ENCODE measurements at regions of chr12 and their contacts with region 1.

Region 1: DNA sequence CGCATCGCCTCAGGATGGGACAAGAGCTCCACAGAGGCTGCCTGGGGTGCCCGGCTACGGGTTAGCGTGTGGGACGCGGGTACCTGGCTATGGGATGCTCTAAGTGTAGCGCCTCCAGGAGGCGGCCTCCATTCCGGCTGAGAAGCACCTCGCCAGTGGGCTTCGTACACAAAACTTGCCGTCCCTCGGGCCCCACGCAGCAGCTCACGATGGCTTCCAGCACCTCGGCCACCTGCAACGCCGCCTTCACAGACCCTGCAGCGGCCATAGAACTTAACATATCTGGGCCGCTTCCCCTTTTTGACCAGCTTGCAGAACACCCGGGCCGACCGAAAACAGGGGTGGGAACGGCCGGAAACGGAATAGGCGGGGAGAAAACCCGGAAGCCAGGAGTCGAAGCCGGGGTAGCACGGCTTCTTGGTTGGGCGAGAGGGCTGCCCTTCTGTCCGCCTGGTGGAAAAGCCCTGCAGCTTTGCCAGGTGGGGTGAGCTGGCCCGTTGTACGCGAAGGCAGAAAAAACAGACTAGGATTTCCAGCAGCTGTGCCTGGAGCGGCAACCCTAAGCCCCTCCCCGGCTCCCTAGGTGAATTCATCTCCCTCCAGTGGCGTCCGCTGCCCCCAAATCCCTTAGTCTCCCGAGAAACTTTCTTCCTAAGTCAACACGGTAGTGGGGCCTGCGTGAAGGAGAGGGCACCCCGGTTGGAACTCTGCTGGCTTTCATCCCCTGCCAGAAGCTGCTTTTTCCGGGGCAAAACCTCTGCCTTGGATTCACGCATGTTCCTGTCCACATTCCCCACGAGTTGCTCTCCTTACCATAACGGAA is at the start of gene BBS10:
- DNase-seq: peak; percentile 70
- ATAC-seq: peak; percentile 99
- H3K4me3 ChIP-seq: peak within 1 kb of the TSS; percentile 84
- H3K27ac ChIP-seq: peak within 1 kb of the TSS; percentile 83
- H3K4me1 ChIP-seq: peaks cover 7% of the 10 kb centered on the region; the same call in 1 of the 2 replicates
- H3K27me3 ChIP-seq: no peaks in the 10 kb centered on the region
- CTCF ChIP-seq: peak in 2 of 3 experiments; percentile 22 to 39; a peak in 3 of 6 replicates
- EP300 ChIP-seq: no peak
- POLR2A ChIP-seq: peak; percentile 93
- RAD21 ChIP-seq: 0 out of 2 replicates have a peak, but pooled peaks have one; percentile 7
- polyA plus RNA-seq, gene BBS10: 1.2 to 1.5 TPM

Region 2: DNA sequence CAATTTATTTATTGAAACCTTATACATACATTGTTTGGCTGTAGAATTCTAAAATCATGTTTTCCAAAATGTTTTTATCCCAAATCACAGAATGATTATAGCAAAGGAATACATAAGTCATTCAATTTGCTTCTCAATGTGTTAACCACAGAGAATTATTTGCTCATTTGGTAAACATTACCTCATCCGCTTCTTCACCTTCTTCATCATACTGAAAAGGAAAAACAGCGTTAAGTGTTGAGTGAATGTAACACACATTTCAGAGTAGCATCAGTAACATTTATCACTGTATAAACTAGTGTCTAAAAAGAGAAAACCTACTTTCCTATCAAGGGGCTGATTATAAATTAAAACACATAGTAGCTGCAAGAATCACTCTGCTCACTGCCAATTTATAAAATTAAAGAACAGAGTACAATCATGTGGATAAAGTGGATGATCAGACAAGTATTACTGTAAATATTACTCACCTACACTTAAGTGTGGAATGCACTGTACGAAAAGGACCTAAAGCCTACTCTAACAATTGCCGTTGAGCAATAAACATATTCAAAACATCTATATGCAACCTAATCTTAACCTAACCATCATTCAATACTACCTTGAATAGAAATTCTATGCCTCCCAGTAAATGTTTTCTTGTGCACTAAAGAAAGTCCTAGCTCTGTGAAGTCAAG is 298.6 kb before region 1 on chr12:
- CTCF ChIA-PET with region 1: interaction called, 5 read pairs
- POLR2A ChIA-PET with region 1: no interaction called
- RAD21 ChIA-PET with region 1: interaction called, 4 read pairs
- SMC1A ChIA-PET with region 1: interaction called, 11 read pairs
- in situ Hi-C with region 1: no loop called
- intact Hi-C with region 1: no loop called
- DNase-seq: no peak
- ATAC-seq: no peak
- H3K4me3 ChIP-seq: no peak overlapping the region
- H3K27ac ChIP-seq: no peak overlapping the region
- H3K4me1 ChIP-seq: no peaks in the 10 kb centered on the region
- H3K27me3 ChIP-seq: no peaks in the 10 kb centered on the region
- CTCF ChIP-seq: no peak
- EP300 ChIP-seq: no peak
- POLR2A ChIP-seq: no peak
- RAD21 ChIP-seq: no peak

Region 3: DNA sequence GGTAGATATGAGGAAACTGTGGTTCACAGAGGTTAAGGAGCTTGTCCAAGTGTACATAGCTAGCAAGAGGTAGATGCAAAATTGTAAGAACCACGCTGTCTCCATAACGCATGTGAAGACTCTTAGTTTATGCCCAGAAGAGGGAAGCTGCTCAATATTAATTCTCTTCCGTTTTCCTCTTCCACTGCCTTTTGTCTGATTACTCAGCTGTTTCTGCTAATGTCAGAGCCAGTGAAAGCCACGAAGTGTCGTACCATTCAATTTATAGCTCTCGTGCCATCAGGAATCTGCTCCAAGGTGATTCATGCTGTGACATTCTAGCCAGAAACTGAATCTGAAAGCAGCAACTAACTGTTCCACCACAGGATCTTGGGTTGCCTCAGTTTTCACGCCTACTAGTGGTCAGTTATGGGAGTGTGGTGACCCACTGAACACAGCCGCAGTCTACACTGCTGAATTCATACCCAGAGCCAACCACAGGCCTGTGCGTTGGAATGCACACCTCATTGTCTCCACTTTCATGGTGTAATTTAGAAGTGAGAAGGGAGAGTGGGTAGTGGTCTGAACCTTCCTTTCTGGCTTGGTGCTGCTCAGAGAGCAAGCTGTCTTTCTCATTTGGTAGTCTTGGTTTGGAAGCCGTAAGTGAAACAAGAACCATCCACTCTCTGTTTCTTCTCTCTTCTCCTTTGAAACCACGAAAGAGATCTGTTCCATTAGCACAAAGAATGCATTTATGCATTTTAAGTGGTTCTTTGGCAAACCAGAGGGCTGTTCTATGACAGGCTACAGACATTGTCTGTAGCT is 189.6 kb before region 1 on chr12:
- CTCF ChIA-PET with region 1: interaction called, 4 read pairs
- POLR2A ChIA-PET with region 1: no interaction called
- RAD21 ChIA-PET with region 1: interaction called, 3 read pairs
- SMC1A ChIA-PET with region 1: interaction called, 6 read pairs
- in situ Hi-C with region 1: no loop called
- intact Hi-C with region 1: loop called (anchors 1 kb)
- DNase-seq: peak; percentile 91
- ATAC-seq: peak; percentile 98
- H3K4me3 ChIP-seq: 0 out of 2 replicates have a peak overlapping the region, but pooled peaks have one; percentile 16
- H3K27ac ChIP-seq: peak overlapping the region; percentile 29; the same call in 1 of the 2 replicates
- H3K4me1 ChIP-seq: peaks cover 14% of the 10 kb centered on the region
- H3K27me3 ChIP-seq: no peaks in the 10 kb centered on the region
- CTCF ChIP-seq: peak; percentile 77 to 79 (median 78)
- EP300 ChIP-seq: peak; percentile 77 to 89
- POLR2A ChIP-seq: no peak
- RAD21 ChIP-seq: peak; percentile 68

Region 4: GRCh38 chr12:76422543-76423438 is 74.5 kb after region 1 on chr12:
- CTCF ChIA-PET with region 1: no interaction called
- POLR2A ChIA-PET with region 1: no interaction called
- RAD21 ChIA-PET with region 1: no interaction called
- SMC1A ChIA-PET with region 1: no interaction called
- in situ Hi-C with region 1: no loop called
- intact Hi-C with region 1: no loop called
- DNase-seq: no peak
- ATAC-seq: no peak
- H3K4me3 ChIP-seq: no peak overlapping the region
- H3K27ac ChIP-seq: no peak overlapping the region
- H3K4me1 ChIP-seq: no peaks in the 10 kb centered on the region
- H3K27me3 ChIP-seq: no peaks in the 10 kb centered on the region
- CTCF ChIP-seq: no peak
- EP300 ChIP-seq: no peak
- POLR2A ChIP-seq: no peak
- RAD21 ChIP-seq: no peak

Region 5: DNA sequence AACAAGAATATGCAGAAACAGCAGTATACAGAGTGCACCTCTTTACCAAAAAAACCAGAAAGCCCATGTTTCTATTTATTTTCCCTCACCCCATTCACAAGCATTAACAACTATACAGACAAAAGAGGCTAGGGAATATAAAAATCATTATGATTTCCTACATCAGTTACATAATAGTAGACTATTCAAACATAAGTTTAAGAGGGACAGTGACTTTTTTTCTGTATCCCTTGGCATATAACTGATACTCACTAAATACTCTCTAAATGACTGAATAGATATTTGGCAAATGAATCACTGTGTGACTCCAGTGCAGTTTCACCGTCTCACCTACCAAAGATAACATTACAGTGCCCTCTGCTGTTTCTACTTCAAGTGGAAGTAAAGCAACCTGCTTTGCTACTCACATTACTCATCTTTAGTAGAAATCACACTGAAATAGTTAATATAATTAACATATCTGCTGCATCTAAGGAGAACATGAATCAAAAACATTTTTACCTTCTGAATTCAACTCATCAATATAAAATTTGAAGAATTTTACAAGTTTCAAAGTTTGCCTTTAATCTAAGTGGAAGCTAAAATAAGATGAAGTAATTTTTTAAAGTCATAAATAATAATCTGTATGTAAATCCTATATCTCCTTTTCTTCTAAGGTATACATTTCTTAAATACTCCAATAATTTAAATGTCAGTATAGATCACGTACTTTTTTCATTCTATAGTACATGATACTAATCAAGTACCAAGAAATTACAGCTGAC is 107.5 kb after region 1 on chr12:
- CTCF ChIA-PET with region 1: interaction called, 24 read pairs
- POLR2A ChIA-PET with region 1: interaction called, 4 read pairs
- RAD21 ChIA-PET with region 1: interaction called, 22 read pairs
- SMC1A ChIA-PET with region 1: interaction called, 7 read pairs
- in situ Hi-C with region 1: no loop called
- intact Hi-C with region 1: loop called (anchors 1 kb)
- DNase-seq: peak; percentile 33
- ATAC-seq: peak; percentile 99
- H3K4me3 ChIP-seq: no peak overlapping the region
- H3K27ac ChIP-seq: no peak overlapping the region
- H3K4me1 ChIP-seq: no peaks in the 10 kb centered on the region
- H3K27me3 ChIP-seq: no peaks in the 10 kb centered on the region
- CTCF ChIP-seq: peak; percentile 54 to 73 (median 71); a peak in 5 of 6 replicates
- EP300 ChIP-seq: no peak
- POLR2A ChIP-seq: no peak
- RAD21 ChIP-seq: peak; percentile 89

Region 6: GRCh38 chr12:76790564-76791552 is 442.6 kb after region 1 on chr12:
- CTCF ChIA-PET with region 1: no interaction called
- POLR2A ChIA-PET with region 1: no interaction called
- RAD21 ChIA-PET with region 1: no interaction called
- SMC1A ChIA-PET with region 1: no interaction called
- in situ Hi-C with region 1: no loop called
- intact Hi-C with region 1: no loop called
- DNase-seq: no peak
- ATAC-seq: peak; percentile 62
- H3K4me3 ChIP-seq: no peak overlapping the region
- H3K27ac ChIP-seq: no peak overlapping the region
- H3K4me1 ChIP-seq: no peaks in the 10 kb centered on the region
- H3K27me3 ChIP-seq: no peaks in the 10 kb centered on the region
- CTCF ChIP-seq: peak; percentile 31 to 53 (median 42); a peak in 4 of 6 replicates
- EP300 ChIP-seq: no peak
- POLR2A ChIP-seq: no peak
- RAD21 ChIP-seq: peak; percentile 83

Measured in GM12878 (cell line).